ENCODE measurements at regions of chr2 and their contacts with region 1.

Region 1: GRCh38 chr2:234411793-234412192 is 85.1 kb downstream of the ARL4C start:
- DNase-seq: no peak
- ATAC-seq: peak; percentile 85
- H3K4me3 Mint-ChIP-seq: peak overlapping the region; percentile 44
- H3K27ac Mint-ChIP-seq: no peak overlapping the region
- H3K4me1 Mint-ChIP-seq: peaks cover 58% of the 10 kb centered on the region
- H3K27me3 Mint-ChIP-seq: no peaks in the 10 kb centered on the region
- CTCF ChIP-seq: no peak

Region 2: GRCh38 chr2:234308813-234309195 is 103.0 kb before region 1 on chr2:
- CTCF ChIA-PET with region 1: no interaction called
- POLR2A ChIA-PET with region 1: interaction called, 4 read pairs
- intact Hi-C with region 1: loop called (anchors 2 kb)
- DNase-seq: peak; percentile 43
- ATAC-seq: peak; percentile 93
- H3K4me3 Mint-ChIP-seq: peak overlapping the region; percentile 50
- H3K27ac Mint-ChIP-seq: peak overlapping the region; percentile 74
- H3K4me1 Mint-ChIP-seq: peaks cover 35% of the 10 kb centered on the region
- H3K27me3 Mint-ChIP-seq: peaks cover 33% of the 10 kb centered on the region
- CTCF ChIP-seq: no peak

Region 3: GRCh38 chr2:234348081-234348480 is 63.7 kb before region 1 on chr2:
- CTCF ChIA-PET with region 1: no interaction called
- POLR2A ChIA-PET with region 1: no interaction called
- intact Hi-C with region 1: loop called (anchors 5 kb)
- DNase-seq: no peak
- ATAC-seq: no peak
- H3K4me3 Mint-ChIP-seq: no peak overlapping the region
- H3K27ac Mint-ChIP-seq: no peak overlapping the region
- H3K4me1 Mint-ChIP-seq: peaks cover 16% of the 10 kb centered on the region
- H3K27me3 Mint-ChIP-seq: peaks cover 6% of the 10 kb centered on the region
- CTCF ChIP-seq: no peak

Region 4: GRCh38 chr2:234392041-234392615 is 19.7 kb before region 1 on chr2:
- CTCF ChIA-PET with region 1: interaction called, 3 read pairs
- POLR2A ChIA-PET with region 1: no interaction called
- intact Hi-C with region 1: loop called (anchors 2 kb)
- DNase-seq: no peak
- ATAC-seq: no peak
- H3K4me3 Mint-ChIP-seq: no peak overlapping the region
- H3K27ac Mint-ChIP-seq: no peak overlapping the region
- H3K4me1 Mint-ChIP-seq: peaks cover 32% of the 10 kb centered on the region
- H3K27me3 Mint-ChIP-seq: no peaks in the 10 kb centered on the region
- CTCF ChIP-seq: no peak

Region 5: GRCh38 chr2:234446404-234447076 is 34.7 kb after region 1 on chr2:
- CTCF ChIA-PET with region 1: interaction called, 4 read pairs
- POLR2A ChIA-PET with region 1: interaction called, 8 read pairs
- intact Hi-C with region 1: loop called (anchors 5 kb)
- DNase-seq: peak; percentile 68
- ATAC-seq: peak; percentile 93
- H3K4me3 Mint-ChIP-seq: peak overlapping the region; percentile 66
- H3K27ac Mint-ChIP-seq: peak overlapping the region; percentile 96
- H3K4me1 Mint-ChIP-seq: peaks cover 83% of the 10 kb centered on the region
- H3K27me3 Mint-ChIP-seq: no peaks in the 10 kb centered on the region
- CTCF ChIP-seq: no peak